Esophagus muscularis mucosa (tissue), 4 donors: ENCODE measurements at regions of chr9 and their contacts with region 1.

Region 1: GRCh38 chr9:108142504-108143201 is 653.1 kb upstream of the KLF4 start:
- DNase-seq: peak; percentile 96
- H3K4me3 ChIP-seq: no peak overlapping the region
- H3K27ac ChIP-seq: peak overlapping the region; percentile 84 to 93 (median 89)
- H3K4me1 ChIP-seq: peaks cover 24 to 35% (median 29%) of the 10 kb centered on the region in 4 donors
- H3K27me3 ChIP-seq: no peaks in the 10 kb centered on the region
- CTCF ChIP-seq: peak in 2 of 3 experiments; percentile 12 to 41
- EP300 ChIP-seq: peak; percentile 96
- POLR2A ChIP-seq: no peak

Region 2: GRCh38 chr9:107749787-107750444 is 392.7 kb before region 1 on chr9:
- intact Hi-C with region 1: loop called (anchors 10 kb)
- DNase-seq: no peak
- H3K4me3 ChIP-seq: no peak overlapping the region
- H3K27ac ChIP-seq: peak overlapping the region; percentile 86 to 88 (median 86)
- H3K4me1 ChIP-seq: peaks cover 30 to 52% (median 42%) of the 10 kb centered on the region in 4 donors
- H3K27me3 ChIP-seq: no peaks in the 10 kb centered on the region
- CTCF ChIP-seq: no peak
- EP300 ChIP-seq: no peak
- POLR2A ChIP-seq: no peak

Region 3: GRCh38 chr9:107894572-107895261 is 247.9 kb before region 1 on chr9:
- intact Hi-C with region 1: loop called (anchors 5 kb)
- DNase-seq: peak; percentile 85
- H3K4me3 ChIP-seq: no peak overlapping the region
- H3K27ac ChIP-seq: peak overlapping the region; percentile 16 to 59 (median 50)
- H3K4me1 ChIP-seq: peaks cover 0 to 18% (median 17%) of the 10 kb centered on the region in 4 donors
- H3K27me3 ChIP-seq: no peaks in the 10 kb centered on the region
- CTCF ChIP-seq: no peak
- EP300 ChIP-seq: no peak
- POLR2A ChIP-seq: no peak

Region 4: DNA sequence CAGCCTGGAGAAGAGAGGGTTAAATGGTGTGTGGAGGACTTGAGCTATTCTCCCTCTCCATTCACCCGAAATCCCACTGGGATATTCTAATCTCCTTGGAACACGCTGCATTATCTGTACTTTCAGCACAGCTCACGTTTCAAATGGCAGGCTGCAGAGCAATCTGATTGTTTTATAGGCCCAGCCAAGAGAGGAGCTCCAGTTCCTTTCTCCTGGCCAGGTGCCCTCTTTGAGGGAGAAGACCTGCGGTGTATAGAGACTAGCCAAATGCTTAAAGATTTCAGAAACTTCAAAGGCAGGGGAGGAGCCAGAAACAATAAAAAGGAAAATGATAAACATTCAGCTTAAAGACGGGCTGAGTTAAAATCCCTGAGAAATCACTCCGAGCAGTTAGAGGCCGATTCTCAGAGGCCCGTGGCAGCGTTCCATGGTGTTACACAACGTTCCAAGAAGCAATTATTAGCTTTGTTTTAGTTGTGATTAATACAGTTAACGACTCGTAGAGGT is 89.0 kb before region 1 on chr9:
- intact Hi-C with region 1: loop called (anchors 5 kb)
- DNase-seq: no peak
- H3K4me3 ChIP-seq: peak overlapping the region in 3 of 4 donors; percentile 14 to 22 (median 16)
- H3K27ac ChIP-seq: peak overlapping the region; percentile 66 to 76 (median 72)
- H3K4me1 ChIP-seq: peaks cover 19 to 53% (median 52%) of the 10 kb centered on the region in 4 donors
- H3K27me3 ChIP-seq: no peaks in the 10 kb centered on the region
- CTCF ChIP-seq: no peak
- EP300 ChIP-seq: no peak
- POLR2A ChIP-seq: no peak